Cardiac septum (tissue), 1 donor: ENCODE measurements at regions of chr1 and their contacts with region 1.

Region 1: GRCh38 chr1:67748630-67749029 is 63.6 kb downstream of the GADD45A start:
- DNase-seq: no peak

Region 2: DNA sequence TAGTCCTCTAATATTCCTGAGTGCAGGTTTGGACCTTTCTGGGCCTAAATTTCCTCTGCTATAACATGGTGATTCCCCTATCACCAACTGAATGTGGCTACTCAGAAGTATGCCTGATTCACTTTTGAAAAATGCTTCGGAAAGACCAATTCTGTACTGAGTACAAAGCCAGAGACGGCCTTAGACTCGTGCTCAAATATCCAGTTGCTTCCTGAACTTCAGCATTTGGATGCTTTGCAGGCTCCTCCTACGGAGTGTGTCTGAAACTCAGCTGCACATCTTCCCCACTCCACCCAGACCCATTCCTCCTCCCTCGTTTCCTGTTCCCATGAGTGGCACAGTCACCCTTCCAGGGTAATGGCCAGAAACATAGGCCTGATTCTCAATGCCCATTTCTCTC is 162.0 kb before region 1 on chr1:
- intact Hi-C with region 1: loop called (anchors 2 kb)
- DNase-seq: no peak

Region 3: DNA sequence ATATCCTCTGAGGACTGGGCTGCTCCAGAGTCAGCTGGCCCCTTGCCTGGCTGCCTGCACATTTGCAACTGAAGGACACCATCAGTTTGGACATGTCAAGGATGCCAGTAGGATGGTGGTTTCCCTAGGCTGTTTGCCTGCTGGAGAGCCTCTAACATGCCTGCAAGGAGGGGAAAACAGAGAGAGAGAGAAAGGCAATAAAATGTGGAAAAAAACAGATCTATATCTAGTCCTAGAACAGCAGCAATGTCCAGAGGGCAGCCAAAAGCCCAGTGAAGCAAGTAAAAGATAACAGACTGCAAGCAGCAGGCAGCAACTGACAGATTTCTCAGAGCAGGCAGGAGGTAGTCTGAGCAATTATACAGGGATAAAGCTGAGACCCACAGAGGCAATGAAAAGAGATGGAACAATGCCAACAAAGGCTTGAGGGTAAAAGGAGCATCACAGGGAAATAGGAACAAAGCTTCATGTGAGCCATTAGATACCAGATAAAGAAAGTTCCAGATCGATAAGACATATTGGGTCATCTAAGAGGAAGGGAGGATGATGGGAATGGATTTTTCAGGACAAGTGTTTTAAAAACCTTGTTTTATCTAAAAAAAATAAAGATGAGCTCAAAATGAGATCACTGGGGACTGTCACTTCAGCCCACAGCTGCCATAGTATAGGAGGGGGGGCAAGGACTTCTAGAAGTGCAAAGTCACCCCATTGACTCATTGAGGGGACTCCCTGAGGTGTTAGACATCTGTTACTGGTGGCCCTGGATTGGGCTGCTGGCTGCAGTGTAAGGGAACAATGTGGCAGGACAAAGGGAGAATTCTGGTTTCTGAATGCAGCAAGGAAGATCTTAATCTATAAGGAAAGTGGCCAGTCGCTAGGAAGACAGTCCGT is 102.2 kb before region 1 on chr1:
- intact Hi-C with region 1: no loop called
- DNase-seq: no peak

Region 4: DNA sequence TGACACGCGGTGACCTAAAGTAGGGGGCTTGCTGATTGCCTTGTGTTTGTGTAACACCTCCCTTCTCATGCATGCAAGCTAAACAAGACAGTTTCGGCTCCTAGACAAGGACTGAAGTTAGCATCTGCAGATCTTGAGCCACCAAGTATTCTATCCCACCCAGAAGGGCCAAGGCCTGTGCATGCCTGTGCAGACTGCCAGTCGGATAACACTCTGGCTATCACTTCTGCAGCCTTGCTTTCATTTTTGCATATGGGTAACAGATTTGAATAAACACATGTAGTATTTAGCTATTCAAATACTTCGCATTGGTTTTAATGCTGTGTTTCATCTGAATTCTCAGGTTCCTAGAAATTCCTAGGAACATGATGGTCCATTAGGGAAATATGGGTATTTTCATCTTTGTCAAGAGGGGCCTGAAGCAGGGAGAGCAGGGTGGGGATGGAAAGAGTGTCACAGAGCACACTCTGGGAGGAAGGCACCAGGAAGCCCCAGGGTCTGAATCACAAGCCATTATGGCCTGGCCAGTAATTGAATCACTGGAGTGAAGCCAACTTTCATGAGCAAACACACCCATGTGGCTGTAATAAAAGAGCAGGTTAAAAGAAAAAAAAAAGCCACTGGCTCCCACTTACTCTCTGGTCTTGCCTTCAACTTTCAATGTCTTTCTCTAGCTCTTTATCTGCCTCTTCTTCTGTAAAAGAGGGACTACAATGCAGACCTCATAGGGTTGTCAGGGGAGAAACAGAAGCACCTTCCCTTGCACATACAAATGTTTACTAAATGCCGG is 35.4 kb before region 1 on chr1:
- intact Hi-C with region 1: loop called (anchors 5 kb)
- DNase-seq: no peak

Region 5: DNA sequence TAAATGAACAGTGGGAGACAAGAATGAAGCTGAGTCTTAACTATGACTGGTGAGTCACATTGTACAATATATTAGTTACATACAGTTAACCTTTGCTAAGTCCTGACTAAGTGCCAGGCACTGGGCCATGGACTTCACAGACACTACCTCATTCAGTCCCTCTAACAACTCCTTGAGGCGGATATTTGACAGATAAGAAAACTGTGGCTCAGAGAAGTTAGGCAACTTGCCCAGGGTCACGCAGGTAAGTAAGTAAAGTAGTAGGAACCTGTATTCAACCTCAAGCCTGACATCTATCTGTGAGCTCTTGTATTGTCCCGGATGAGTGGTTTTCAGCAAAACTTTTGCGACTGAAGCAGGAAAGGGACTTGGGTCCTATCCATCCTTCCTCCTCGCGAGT is 22.5 kb after region 1 on chr1:
- intact Hi-C with region 1: no loop called
- DNase-seq: no peak